Lower leg skin (tissue), 4 donors: ENCODE measurements at regions of chr6 and their contacts with region 1.

Region 1: DNA sequence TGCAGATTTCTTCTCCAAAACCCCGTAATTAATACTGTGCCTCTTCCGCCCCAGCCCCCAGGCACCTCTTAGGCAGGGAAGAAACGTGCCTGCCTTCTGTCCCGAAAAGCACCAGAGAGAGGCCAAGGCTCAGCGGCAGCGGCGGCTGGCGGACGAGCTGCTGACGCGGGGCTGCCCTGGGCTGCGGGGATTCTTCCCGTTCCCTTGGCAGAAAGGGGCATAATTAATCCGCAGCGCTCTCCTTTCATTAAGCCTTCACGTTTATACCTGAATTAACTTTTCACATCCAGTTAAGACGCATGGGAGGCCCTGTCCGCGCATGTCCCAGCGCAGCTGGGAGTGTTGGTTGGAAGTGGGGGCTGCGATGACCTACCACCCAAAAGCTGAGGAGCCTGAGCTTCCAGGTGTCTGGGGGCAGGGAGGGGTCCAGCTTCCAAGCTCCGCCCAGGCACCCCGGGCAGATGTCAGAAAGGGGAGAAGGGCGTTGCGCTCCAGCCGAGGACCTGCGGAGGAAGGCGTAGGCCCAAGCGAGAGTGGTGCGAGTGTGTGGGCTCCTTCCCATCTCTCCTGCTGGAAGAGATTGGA is 167.4 kb upstream of the LRFN2 start:
- DNase-seq: no peak
- H3K4me3 ChIP-seq: no peak overlapping the region
- CTCF ChIP-seq: no peak
- POLR2A ChIP-seq: no peak

Region 2: GRCh38 chr6:40815731-40816130 is 61.2 kb after region 1 on chr6:
- intact Hi-C with region 1: loop called (anchors 2 kb)
- DNase-seq: no peak
- H3K4me3 ChIP-seq: no peak overlapping the region
- CTCF ChIP-seq: no peak
- POLR2A ChIP-seq: no peak

Region 3: GRCh38 chr6:41271901-41272395 is 517.4 kb after region 1 on chr6:
- intact Hi-C with region 1: no loop called
- DNase-seq: peak in 1 of 2 donors; percentile 36
- H3K4me3 ChIP-seq: no peak overlapping the region
- CTCF ChIP-seq: no peak
- POLR2A ChIP-seq: no peak